ENCODE measurements at regions of chr13 and their contacts with region 1.

Region 1: DNA sequence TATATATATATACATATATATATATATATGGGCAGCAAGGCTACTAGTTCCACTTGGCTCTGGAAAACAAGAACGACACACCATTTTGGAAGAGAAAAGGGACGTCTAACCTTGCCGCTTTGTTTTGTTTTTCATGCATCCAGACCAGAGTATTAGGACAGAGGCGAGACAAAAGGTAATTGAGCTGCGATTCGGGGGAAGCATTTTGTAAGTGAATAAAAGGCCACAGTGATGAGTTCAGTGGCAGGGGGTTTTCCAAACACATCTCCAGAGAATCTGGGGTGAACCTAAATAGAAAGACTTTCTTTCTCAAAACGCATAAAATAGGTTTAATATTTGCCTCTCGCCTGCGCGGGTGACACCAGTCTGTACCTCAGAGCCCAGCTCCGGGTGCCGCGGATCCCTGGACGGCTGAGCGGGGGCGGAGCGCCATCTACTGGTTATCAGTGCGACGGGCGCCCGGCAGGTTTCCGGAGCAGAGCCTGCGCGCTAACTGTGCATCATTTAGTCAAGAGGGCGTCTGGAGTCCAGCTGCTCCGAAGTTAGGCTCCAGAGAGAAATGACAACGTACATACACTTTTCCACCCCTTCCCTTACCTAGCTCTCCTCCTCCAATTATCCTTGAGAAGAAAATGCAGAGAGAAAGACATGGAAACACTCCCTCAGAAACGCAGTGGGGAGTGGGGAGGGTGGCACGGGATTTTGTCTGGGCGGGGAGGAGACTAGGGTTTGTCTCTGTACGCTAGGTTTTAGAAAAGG is 262.3 kb downstream of the TBC1D4 start:
- DNase-seq: peak; percentile 71 to 92 (median 85)
- ATAC-seq: peak; percentile 92 to 99 (median 96)
- H3K4me3 ChIP-seq: peak overlapping the region in 9 of 12 donors; percentile 19 to 44 (median 30)
- H3K27ac ChIP-seq: no peak overlapping the region
- H3K4me1 ChIP-seq: peaks cover 0 to 10% (median 0%) of the 10 kb centered on the region in 12 donors
- H3K27me3 ChIP-seq: peaks cover 0 to 4% (median 0%) of the 10 kb centered on the region in 9 donors
- CTCF ChIP-seq: peak; percentile 92 to 99 (median 98)
- POLR2A ChIP-seq: no peak

Region 2: GRCh38 chr13:73765651-73766384 is 1453.8 kb before region 1 on chr13:
- intact Hi-C with region 1: loop called in 1 of 10 experiments (anchors 10 kb)
- DNase-seq: peak; percentile 86 to 93 (median 90)
- ATAC-seq: peak; percentile 68 to 88 (median 78)
- H3K4me3 ChIP-seq: peak overlapping the region in 9 of 12 donors; percentile 8 to 34 (median 22)
- H3K27ac ChIP-seq: peak overlapping the region; percentile 19 to 77 (median 66)
- H3K4me1 ChIP-seq: peaks cover 8 to 37% (median 32%) of the 10 kb centered on the region in 12 donors
- H3K27me3 ChIP-seq: no peaks in the 10 kb centered on the region
- CTCF ChIP-seq: no peak
- POLR2A ChIP-seq: no peak

Region 3: GRCh38 chr13:73835138-73835721 is 1384.4 kb before region 1 on chr13:
- intact Hi-C with region 1: loop called in 6 of 10 experiments (anchors 5 to 10 kb)
- DNase-seq: no peak
- ATAC-seq: peak in 2 of 4 donors; percentile 48 to 69
- H3K4me3 ChIP-seq: no peak overlapping the region
- H3K27ac ChIP-seq: no peak overlapping the region
- H3K4me1 ChIP-seq: peaks cover 0 to 28% (median 4%) of the 10 kb centered on the region in 12 donors
- H3K27me3 ChIP-seq: no peaks in the 10 kb centered on the region
- CTCF ChIP-seq: peak; percentile 56 to 78 (median 70)
- POLR2A ChIP-seq: no peak

Region 4: DNA sequence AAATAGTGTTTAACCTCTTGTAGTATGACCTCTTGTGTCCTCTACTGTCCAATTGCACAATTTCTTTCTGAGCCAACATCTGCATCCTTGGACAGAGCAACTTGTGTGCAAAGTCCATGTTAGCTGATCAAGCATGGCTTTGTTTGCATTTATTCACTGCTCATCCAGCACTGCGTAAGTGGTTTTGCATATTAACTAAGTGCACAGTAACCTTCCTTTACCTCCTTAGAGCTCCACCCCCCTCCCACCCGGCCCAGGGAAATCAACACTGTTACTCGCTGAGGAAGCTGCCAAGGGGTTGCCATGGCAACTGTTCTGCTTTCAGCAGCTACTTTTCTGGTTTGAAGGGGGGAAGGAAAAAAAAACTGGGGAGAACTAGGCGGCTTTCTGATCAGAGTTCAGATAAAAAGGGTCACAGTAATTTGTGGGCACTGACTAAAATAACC is 931.9 kb before region 1 on chr13:
- intact Hi-C with region 1: loop called in 2 of 10 experiments (anchors 5 to 10 kb)
- DNase-seq: peak; percentile 71 to 87 (median 74)
- ATAC-seq: peak; percentile 16 to 39 (median 37)
- H3K4me3 ChIP-seq: peak overlapping the region in 10 of 12 donors; percentile 16 to 46 (median 36)
- H3K27ac ChIP-seq: peak overlapping the region in 5 of 12 donors; percentile 10 to 63 (median 56)
- H3K4me1 ChIP-seq: peaks cover 0 to 41% (median 25%) of the 10 kb centered on the region in 12 donors
- H3K27me3 ChIP-seq: no peaks in the 10 kb centered on the region
- CTCF ChIP-seq: no peak
- POLR2A ChIP-seq: no peak

Region 5: DNA sequence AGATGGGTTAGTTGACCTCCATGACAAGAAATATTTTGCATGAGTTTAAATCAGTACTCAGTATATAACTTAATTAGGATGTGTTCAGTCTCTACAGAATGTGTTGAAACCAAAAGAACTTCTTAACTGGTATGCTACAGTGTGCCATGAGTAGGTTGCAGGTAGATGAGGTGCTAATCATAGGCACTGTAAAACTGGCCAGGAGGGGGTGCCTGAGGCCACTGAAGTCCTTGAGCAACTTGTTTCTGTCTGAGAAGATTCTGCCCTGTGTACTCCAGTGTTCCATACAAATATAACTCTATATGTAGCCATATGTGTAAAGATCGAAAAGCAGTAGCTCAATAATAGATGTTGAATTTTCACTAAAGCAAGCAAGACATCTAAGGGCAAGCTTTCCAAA is 536.2 kb before region 1 on chr13:
- intact Hi-C with region 1: loop called in 1 of 10 experiments (anchors 10 kb)
- DNase-seq: no peak
- ATAC-seq: no peak
- H3K4me3 ChIP-seq: no peak overlapping the region
- H3K27ac ChIP-seq: no peak overlapping the region
- H3K4me1 ChIP-seq: peaks cover 0 to 10% (median 0%) of the 10 kb centered on the region in 12 donors
- H3K27me3 ChIP-seq: no peaks in the 10 kb centered on the region
- CTCF ChIP-seq: no peak
- POLR2A ChIP-seq: no peak

Region 6: GRCh38 chr13:75468098-75468497 is 248.4 kb after region 1 on chr13:
- intact Hi-C with region 1: no loop called
- DNase-seq: no peak
- ATAC-seq: peak in 1 of 4 donors; percentile 20
- H3K4me3 ChIP-seq: no peak overlapping the region
- H3K27ac ChIP-seq: peak overlapping the region in 6 of 12 donors; percentile 19 to 64 (median 21)
- H3K4me1 ChIP-seq: peaks cover 0 to 59% (median 19%) of the 10 kb centered on the region in 12 donors
- H3K27me3 ChIP-seq: no peaks in the 10 kb centered on the region
- CTCF ChIP-seq: no peak
- POLR2A ChIP-seq: no peak